Activated T-helper 2 cell treated with anti-CD3 and anti-CD28 coated beads, Interferon-gamma antibody, Interleukin-2, Interleukin-4, amounts not matched to agents 10 μg/mL and 5 μg/mL and 100 μg/mL, durations not matched to agents 14 hours and 24 hours and 36 hours (primary cell): ENCODE measurements at regions of chr4 and their contacts with region 1.

Region 1: GRCh38 chr4:140153718-140154571 is at the start of gene MAML3:
- DNase-seq: peak; percentile 82
- H3K4me3 Mint-ChIP-seq: peak within 1 kb of the TSS; percentile 91
- H3K27ac Mint-ChIP-seq: peak within 1 kb of the TSS; percentile 33
- H3K4me1 Mint-ChIP-seq: peaks cover 39% of the 10 kb centered on the region
- H3K27me3 Mint-ChIP-seq: peaks cover 16% of the 10 kb centered on the region
- total RNA-seq, gene MAML3: 3.0 and 3.3 TPM in 2 replicates

Region 2: DNA sequence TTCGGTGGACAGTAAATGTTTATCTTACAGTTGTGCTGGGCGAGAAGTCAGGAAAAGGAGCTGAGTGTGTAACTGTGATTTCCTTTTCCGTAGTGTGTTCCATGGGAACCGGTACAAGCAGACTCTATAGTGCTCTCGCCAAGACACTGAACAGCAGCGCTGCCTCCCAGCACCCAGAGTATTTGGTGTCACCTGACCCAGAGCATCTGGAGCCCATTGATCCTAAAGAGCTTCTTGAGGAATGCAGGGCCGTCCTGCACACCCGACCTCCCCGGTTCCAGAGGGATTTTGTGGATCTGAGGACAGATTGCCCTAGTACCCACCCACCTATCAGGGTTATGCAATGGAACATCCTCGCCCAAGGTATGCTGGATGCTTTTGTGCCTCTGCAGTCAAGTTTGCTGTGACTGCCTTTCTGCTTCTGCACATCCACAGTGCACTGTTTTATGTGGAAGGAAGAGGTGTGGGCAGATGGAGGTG is 1110.9 kb before region 1 on chr4:
- intact Hi-C with region 1: no loop called
- DNase-seq: no peak
- H3K4me3 Mint-ChIP-seq: no peak overlapping the region
- H3K27ac Mint-ChIP-seq: no peak overlapping the region
- H3K4me1 Mint-ChIP-seq: peaks cover 7% of the 10 kb centered on the region
- H3K27me3 Mint-ChIP-seq: no peaks in the 10 kb centered on the region

Region 3: DNA sequence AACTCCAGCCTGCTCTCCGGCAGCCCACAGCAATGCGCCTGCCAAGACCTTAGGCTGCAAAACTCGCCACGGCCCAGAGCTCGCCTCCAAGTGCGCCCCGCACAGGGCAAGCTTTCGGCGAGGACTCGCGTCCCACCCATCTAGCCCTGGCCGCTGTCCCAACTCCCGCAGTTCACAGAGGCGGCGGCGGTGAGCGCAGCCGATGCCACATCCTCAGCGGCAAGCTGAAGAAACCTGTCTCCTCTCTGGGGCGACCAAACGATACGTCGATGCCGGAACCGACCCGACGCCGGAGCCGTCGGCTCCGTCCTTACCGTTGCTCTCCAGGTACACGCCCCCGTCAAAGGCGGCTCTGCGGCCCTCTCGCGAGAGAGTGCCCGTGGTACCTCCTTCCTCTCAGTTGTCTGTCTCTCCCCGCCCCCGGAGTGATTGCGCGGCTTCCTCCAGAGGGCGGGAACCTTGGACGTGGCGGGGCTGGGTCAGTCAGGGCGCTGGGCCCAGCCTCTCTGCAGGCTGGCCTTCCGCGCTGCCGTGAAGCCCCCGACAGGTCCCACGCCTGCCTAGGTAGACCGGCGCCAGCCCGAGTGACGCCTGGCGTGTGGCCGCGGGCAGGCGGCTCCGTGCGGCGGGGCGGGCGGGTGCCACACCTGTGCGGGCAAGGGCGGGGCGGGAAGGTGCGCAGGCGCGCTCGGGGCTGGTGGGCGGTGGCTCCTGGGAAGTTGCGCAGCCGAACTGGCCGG is 700.4 kb before region 1 on chr4:
- intact Hi-C with region 1: loop called (anchors 5 kb)
- DNase-seq: peak; percentile 96
- H3K4me3 Mint-ChIP-seq: peak overlapping the region; percentile 90
- H3K27ac Mint-ChIP-seq: peak overlapping the region; percentile 99
- H3K4me1 Mint-ChIP-seq: peaks cover 52% of the 10 kb centered on the region
- H3K27me3 Mint-ChIP-seq: no peaks in the 10 kb centered on the region

Region 4: DNA sequence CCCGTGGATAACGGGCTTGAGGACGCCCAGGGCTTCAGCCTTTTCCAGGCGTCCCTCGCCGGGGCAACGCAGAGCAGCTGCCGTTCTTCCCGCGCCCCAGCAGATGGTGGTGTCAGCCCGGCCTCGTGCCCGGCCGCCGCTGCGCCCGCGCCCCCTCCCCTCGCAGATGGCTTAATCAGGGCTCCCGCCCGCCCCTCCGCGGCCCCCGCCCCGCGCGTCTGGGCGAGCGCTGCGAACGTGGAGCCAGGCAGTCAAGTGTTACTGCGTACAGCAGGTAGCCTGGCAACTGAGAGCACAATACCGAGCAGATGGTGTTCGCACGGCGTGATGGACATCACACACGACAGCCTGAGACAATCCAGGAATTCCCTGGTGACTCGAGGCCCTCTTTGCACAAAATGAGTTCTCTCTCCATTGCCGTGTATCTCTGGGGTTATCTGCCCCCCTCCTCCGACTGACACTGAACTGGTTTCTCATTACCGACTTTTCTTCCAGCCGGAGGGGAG is 419.0 kb before region 1 on chr4:
- intact Hi-C with region 1: loop called (anchors 5 kb)
- DNase-seq: peak; percentile 35
- H3K4me3 Mint-ChIP-seq: peak overlapping the region; percentile 49
- H3K27ac Mint-ChIP-seq: no peak overlapping the region
- H3K4me1 Mint-ChIP-seq: peaks cover 11% of the 10 kb centered on the region
- H3K27me3 Mint-ChIP-seq: peaks cover 54% of the 10 kb centered on the region

Region 5: GRCh38 chr4:140012688-140013486 is 141.1 kb before region 1 on chr4:
- intact Hi-C with region 1: loop called (anchors 10 kb)
- DNase-seq: peak; percentile 29
- H3K4me3 Mint-ChIP-seq: no peak overlapping the region
- H3K27ac Mint-ChIP-seq: no peak overlapping the region
- H3K4me1 Mint-ChIP-seq: peaks cover 9% of the 10 kb centered on the region
- H3K27me3 Mint-ChIP-seq: peaks cover 42% of the 10 kb centered on the region

Region 6: GRCh38 chr4:140095694-140096482 is 58.1 kb before region 1 on chr4:
- intact Hi-C with region 1: loop called (anchors 1 kb)
- DNase-seq: peak; percentile 61
- H3K4me3 Mint-ChIP-seq: peak overlapping the region; percentile 86
- H3K27ac Mint-ChIP-seq: peak overlapping the region; percentile 99
- H3K4me1 Mint-ChIP-seq: peaks cover 82% of the 10 kb centered on the region
- H3K27me3 Mint-ChIP-seq: no peaks in the 10 kb centered on the region

Region 7: GRCh38 chr4:140133576-140133975 is 20.4 kb before region 1 on chr4:
- intact Hi-C with region 1: loop called (anchors 2 kb)
- DNase-seq: no peak
- H3K4me3 Mint-ChIP-seq: no peak overlapping the region
- H3K27ac Mint-ChIP-seq: no peak overlapping the region
- H3K4me1 Mint-ChIP-seq: peaks cover 33% of the 10 kb centered on the region
- H3K27me3 Mint-ChIP-seq: peaks cover 13% of the 10 kb centered on the region

Region 8: GRCh38 chr4:140373328-140374129 is 219.6 kb after region 1 on chr4 and contains the start of gene SCOC:
- intact Hi-C with region 1: loop called (anchors 5 kb)
- DNase-seq: peak; percentile 97
- H3K4me3 Mint-ChIP-seq: no peak within 1 kb of the TSS
- H3K27ac Mint-ChIP-seq: no peak within 1 kb of the TSS
- H3K4me1 Mint-ChIP-seq: peaks cover 28% of the 10 kb centered on the region
- H3K27me3 Mint-ChIP-seq: peaks cover 10% of the 10 kb centered on the region
- total RNA-seq, gene SCOC: 36.7 and 38.0 TPM in 2 replicates